Lower leg skin (tissue), 4 donors: ENCODE measurements at regions of chr15 and their contacts with region 1.

Region 1: GRCh38 chr15:78139578-78139977 is 8.3 kb upstream of the CIB2 start:
- DNase-seq: no peak
- H3K4me3 ChIP-seq: no peak overlapping the region
- CTCF ChIP-seq: no peak
- POLR2A ChIP-seq: no peak

Region 2: DNA sequence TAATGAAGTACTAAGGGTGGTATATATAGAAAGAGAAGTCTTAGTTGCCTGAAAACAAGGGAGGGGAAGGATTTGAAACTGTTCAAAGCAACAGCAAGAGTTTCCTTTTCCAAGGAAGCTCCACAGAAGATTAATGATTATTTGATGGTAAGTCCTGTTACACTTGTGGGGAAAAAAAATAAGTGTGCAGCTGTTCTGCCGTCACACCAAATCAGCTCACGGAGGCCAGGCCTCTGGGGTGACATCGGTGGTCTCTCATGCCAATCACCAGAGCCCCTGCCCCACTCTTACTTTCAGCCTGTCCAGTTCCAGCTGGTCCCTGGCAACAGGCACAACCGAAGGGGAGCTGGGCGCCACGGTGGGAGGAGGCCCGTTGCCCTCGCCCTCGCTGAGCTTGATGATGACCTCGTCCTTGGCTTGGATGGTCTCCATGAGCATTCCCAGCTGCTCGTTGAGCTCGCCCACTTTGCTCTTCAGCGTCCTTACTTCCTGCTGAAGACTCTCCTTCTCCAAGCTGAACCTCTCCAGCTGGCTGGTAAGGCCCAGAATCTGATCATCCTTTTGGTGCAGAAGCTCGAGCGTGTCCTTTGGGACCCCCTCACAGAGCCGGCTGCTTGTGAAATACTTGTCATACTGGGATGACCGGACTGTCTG is 115.6 kb before region 1 on chr15:
- intact Hi-C with region 1: no loop called
- DNase-seq: peak in 1 of 2 donors; percentile 83
- H3K4me3 ChIP-seq: no peak overlapping the region
- CTCF ChIP-seq: no peak
- POLR2A ChIP-seq: no peak

Region 3: GRCh38 chr15:78299101-78299930 is 159.7 kb after region 1 on chr15 and contains the start of gene SKIC8:
- intact Hi-C with region 1: loop called (anchors 5 kb)
- DNase-seq: peak; percentile 90 to 97
- H3K4me3 ChIP-seq: peak within 1 kb of the TSS; percentile 93
- CTCF ChIP-seq: no peak
- POLR2A ChIP-seq: peak in 1 of 2 donors; percentile 45
- total RNA-seq, gene SKIC8: 55.2 to 62.2 (median 59.4) TPM

Region 4: GRCh38 chr15:78449220-78449999 is 309.8 kb after region 1 on chr15:
- intact Hi-C with region 1: no loop called
- DNase-seq: no peak
- H3K4me3 ChIP-seq: no peak overlapping the region
- CTCF ChIP-seq: no peak
- POLR2A ChIP-seq: no peak

Region 5: GRCh38 chr15:79798311-79798710 is 1658.7 kb after region 1 on chr15:
- intact Hi-C with region 1: no loop called
- DNase-seq: no peak
- H3K4me3 ChIP-seq: no peak overlapping the region
- CTCF ChIP-seq: no peak
- POLR2A ChIP-seq: no peak